Activated T-helper 2 cell treated with anti-CD3 and anti-CD28 coated beads, Interferon-gamma antibody, Interleukin-2, Interleukin-4, amounts not matched to agents 10 μg/mL and 5 μg/mL and 100 μg/mL, durations not matched to agents 14 hours and 24 hours and 36 hours (primary cell): ENCODE measurements at regions of chr2 and their contacts with region 1.

Region 1: GRCh38 chr2:69643602-69644505 is at the start of gene AAK1:
- DNase-seq: peak; percentile 79
- H3K4me3 Mint-ChIP-seq: peak within 1 kb of the TSS; percentile 95
- H3K27ac Mint-ChIP-seq: peak within 1 kb of the TSS; percentile 98
- H3K4me1 Mint-ChIP-seq: peaks cover 63% of the 10 kb centered on the region
- H3K27me3 Mint-ChIP-seq: no peaks in the 10 kb centered on the region
- total RNA-seq, gene AAK1: 108 TPM in 2 replicates

Region 2: GRCh38 chr2:69386789-69387734 is 256.8 kb before region 1 on chr2 and contains the start of gene GFPT1:
- intact Hi-C with region 1: loop called (anchors 2 kb)
- DNase-seq: peak; percentile 92
- H3K4me3 Mint-ChIP-seq: peak within 1 kb of the TSS; percentile 88
- H3K27ac Mint-ChIP-seq: peak within 1 kb of the TSS; percentile 92
- H3K4me1 Mint-ChIP-seq: peaks cover 41% of the 10 kb centered on the region
- H3K27me3 Mint-ChIP-seq: no peaks in the 10 kb centered on the region
- total RNA-seq, gene GFPT1: 55.7 and 56.6 TPM in 2 replicates

Region 3: GRCh38 chr2:69453475-69454129 is 190.3 kb before region 1 on chr2:
- intact Hi-C with region 1: no loop called
- DNase-seq: no peak
- H3K4me3 Mint-ChIP-seq: no peak overlapping the region
- H3K27ac Mint-ChIP-seq: peak overlapping the region; percentile 11
- H3K4me1 Mint-ChIP-seq: peaks cover 13% of the 10 kb centered on the region
- H3K27me3 Mint-ChIP-seq: no peaks in the 10 kb centered on the region

Region 4: GRCh38 chr2:69559442-69560146 is 84.3 kb before region 1 on chr2:
- intact Hi-C with region 1: loop called (anchors 2 kb)
- DNase-seq: no peak
- H3K4me3 Mint-ChIP-seq: peak overlapping the region; percentile 7
- H3K27ac Mint-ChIP-seq: peak overlapping the region; percentile 52
- H3K4me1 Mint-ChIP-seq: peaks cover 67% of the 10 kb centered on the region
- H3K27me3 Mint-ChIP-seq: no peaks in the 10 kb centered on the region

Region 5: GRCh38 chr2:69625078-69625795 is 18.6 kb before region 1 on chr2:
- intact Hi-C with region 1: loop called (anchors 1 kb)
- DNase-seq: no peak
- H3K4me3 Mint-ChIP-seq: no peak overlapping the region
- H3K27ac Mint-ChIP-seq: no peak overlapping the region
- H3K4me1 Mint-ChIP-seq: peaks cover 15% of the 10 kb centered on the region
- H3K27me3 Mint-ChIP-seq: no peaks in the 10 kb centered on the region

Region 6: DNA sequence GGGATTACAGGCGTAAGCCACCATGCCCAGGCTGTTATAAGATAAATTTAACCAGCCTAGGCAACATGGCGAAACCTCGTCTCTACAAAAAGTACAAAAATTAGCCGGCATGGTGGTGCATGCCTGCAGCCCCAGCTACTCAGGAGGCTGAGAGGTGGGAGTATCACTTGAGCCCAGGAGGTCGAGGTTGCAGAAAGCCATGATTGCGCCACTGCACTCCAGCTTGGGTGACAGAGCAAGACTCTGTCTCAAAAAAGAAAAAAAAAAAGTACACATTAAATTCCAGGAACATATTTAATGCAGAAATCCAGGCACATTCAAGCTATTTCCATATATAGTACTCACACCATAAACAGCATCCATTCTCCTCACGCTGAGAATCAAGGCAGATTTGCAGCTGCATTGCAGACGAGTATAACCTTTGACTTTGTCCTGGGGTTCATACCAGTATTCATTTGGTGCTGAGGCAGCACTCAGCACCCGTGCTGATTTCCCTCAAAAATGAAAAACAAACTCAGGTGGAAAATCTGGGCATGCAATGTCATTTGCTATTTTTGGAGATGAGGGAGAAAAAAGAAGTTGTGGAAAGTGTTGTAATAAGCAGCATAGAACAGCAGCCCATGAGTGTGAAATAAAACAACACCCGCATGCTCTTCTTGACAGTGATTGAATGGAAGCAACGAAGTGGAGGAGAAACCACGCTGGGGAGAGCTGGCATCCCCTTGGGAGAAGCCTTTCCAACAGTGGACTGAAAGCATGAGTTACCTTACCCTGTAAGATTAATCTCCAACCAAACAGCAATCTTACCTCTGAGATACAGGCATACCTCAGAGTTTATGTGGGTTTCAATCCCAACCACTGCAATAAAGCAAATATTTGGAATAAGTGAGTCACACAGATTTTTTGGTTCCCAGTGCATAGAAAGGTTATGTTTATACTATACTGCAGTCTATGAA is 51.3 kb after region 1 on chr2:
- intact Hi-C with region 1: loop called (anchors 1 kb)
- DNase-seq: no peak
- H3K4me3 Mint-ChIP-seq: no peak overlapping the region
- H3K27ac Mint-ChIP-seq: peak overlapping the region; percentile 45
- H3K4me1 Mint-ChIP-seq: peaks cover 56% of the 10 kb centered on the region
- H3K27me3 Mint-ChIP-seq: no peaks in the 10 kb centered on the region

Region 7: GRCh38 chr2:70086838-70087701 is 443.2 kb after region 1 on chr2 and contains the start of gene PCBP1:
- intact Hi-C with region 1: loop called (anchors 1 kb)
- DNase-seq: peak; percentile 92
- H3K4me3 Mint-ChIP-seq: peak within 1 kb of the TSS; percentile 98
- H3K27ac Mint-ChIP-seq: peak within 1 kb of the TSS; percentile 99
- H3K4me1 Mint-ChIP-seq: peaks cover 53% of the 10 kb centered on the region
- H3K27me3 Mint-ChIP-seq: no peaks in the 10 kb centered on the region
- total RNA-seq, gene PCBP1: 433 and 442 TPM in 2 replicates